Activated CD8-positive, alpha-beta memory T cell treated with anti-CD3 and anti-CD28 coated beads, Interleukin-2, amount 10 ng/mL, durations not matched to agents 7 days and 5 days (primary cell): ENCODE measurements at regions of chr15 and their contacts with region 1.

Region 1: DNA sequence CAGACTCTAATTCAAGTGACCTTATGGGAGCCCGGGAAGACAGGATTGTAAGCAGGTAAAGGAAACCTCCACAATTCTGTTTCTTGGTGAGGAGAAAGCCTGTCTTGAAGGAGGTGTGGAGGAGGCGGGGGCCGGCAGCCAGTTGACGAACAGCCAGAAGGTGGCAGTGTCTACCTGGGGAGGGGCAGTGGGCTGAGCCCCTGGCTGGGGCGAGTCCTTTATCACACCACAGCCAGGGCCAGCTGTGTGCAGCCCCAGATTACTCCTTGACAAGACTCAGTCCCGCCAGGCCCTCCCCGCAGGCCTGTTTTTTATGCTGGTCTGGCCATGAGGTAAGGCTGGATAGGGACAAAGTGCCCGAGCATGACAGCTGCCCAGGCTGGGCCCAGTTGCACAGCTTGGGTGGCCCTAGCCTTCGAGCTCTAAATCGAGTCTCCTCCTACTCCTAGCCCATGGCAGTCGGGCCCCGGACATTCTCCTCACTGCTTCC is 40.9 kb upstream of the IDH2 start:
- DNase-seq: peak; percentile 84
- ATAC-seq: peak; percentile 88
- H3K4me3 Mint-ChIP-seq: no peak overlapping the region
- H3K27ac Mint-ChIP-seq: peak overlapping the region; percentile 80
- H3K4me1 Mint-ChIP-seq: peaks cover 38% of the 10 kb centered on the region
- H3K27me3 Mint-ChIP-seq: no peaks in the 10 kb centered on the region

Region 2: DNA sequence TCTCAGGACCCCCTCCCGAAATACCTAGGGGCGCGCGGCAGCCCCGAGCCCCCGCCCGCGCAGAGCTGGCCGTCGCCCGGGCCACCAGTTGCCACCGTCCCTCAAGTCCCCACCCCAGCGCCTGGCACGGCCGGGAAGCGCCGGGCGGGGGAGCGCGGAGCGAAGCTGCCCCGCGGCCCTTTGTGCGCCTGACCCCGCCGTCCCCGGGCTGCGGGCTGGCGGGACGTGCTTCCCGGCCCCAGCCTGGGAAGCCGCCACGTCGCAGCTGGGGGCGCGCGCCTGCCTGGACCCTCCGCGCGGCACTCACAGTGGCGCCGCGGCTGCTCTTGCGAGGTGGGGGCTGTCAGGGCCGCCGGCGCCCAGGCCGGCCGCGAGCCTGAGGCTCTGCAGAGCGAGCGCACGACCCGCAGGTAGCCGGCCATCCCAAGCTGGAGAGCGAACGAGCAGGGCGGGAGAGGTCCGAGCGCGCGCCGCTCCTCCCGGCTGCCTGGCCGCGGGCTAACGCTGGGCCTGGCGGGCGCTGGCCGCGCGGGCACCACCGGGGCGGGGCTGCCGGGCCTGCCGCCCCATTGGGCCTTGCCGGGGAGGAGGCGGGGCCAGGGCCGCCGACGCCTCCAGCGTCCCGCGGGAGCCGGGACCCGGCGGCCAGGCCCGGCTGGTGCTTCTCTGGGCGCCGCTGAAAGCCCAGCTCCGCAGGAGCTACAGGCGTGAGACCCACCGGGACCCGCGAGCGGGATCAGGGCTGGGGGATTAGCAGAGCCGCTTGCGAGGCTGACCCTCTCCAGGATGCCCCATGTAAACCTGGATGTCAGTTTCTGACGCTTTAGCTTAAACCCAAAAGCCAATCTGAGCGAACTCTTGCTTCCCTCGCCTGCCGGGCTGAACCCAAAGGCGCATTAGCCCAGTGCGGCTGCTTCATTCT is 41.0 kb before region 1 on chr15 and contains the start of gene IDH2:
- CTCF ChIA-PET with region 1: interaction called, 11 read pairs
- DNase-seq: peak; percentile 80
- ATAC-seq: peak; percentile 84
- H3K4me3 Mint-ChIP-seq: peak within 1 kb of the TSS; percentile 79
- H3K27ac Mint-ChIP-seq: peak within 1 kb of the TSS; percentile 96
- H3K4me1 Mint-ChIP-seq: peaks cover 47% of the 10 kb centered on the region
- H3K27me3 Mint-ChIP-seq: peaks cover 4% of the 10 kb centered on the region
- total RNA-seq, gene IDH2: 196 to 293 TPM

Region 3: GRCh38 chr15:90178468-90179435 is 35.5 kb after region 1 on chr15:
- CTCF ChIA-PET with region 1: no interaction called
- DNase-seq: no peak
- ATAC-seq: no peak
- H3K4me3 Mint-ChIP-seq: no peak overlapping the region
- H3K27ac Mint-ChIP-seq: no peak overlapping the region
- H3K4me1 Mint-ChIP-seq: peaks cover 17% of the 10 kb centered on the region
- H3K27me3 Mint-ChIP-seq: peaks cover 10% of the 10 kb centered on the region

Region 4: DNA sequence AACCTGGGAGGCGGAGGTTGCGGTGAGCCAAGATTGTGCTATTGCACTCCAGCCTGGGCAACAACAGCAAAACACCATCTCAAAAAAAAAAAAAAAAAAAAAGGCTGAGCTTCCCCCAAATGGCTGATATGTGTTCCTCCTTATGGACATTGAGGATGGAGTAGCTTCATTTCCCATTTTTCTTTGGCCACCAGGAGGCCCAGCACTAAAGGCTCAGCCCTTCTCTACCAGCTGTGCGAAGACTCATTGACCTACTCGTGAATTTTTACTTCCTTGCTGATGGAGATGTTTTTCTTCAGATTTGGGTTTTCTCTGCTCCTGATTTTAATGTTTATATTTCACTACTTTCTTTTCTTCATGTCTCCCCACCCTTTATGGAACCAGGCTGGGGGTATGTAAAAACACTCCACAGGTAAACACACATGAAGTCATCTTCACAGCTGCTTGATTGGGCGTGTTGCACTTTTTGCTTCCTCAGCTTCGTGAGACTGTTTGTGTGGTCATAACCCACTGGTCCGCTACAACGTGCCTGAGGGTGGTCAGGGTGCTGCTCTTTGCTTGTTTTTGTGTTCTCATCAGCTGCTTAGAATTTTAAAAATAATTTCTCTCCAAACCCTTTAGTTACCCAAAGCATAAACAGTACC is 71.5 kb after region 1 on chr15:
- CTCF ChIA-PET with region 1: interaction called, 11 read pairs
- DNase-seq: no peak
- ATAC-seq: no peak
- H3K4me3 Mint-ChIP-seq: no peak overlapping the region
- H3K27ac Mint-ChIP-seq: no peak overlapping the region
- H3K4me1 Mint-ChIP-seq: peaks cover 40% of the 10 kb centered on the region
- H3K27me3 Mint-ChIP-seq: no peaks in the 10 kb centered on the region

Region 5: GRCh38 chr15:90221246-90221900 is 78.2 kb after region 1 on chr15:
- CTCF ChIA-PET with region 1: interaction called, 27 read pairs
- DNase-seq: no peak
- ATAC-seq: peak; percentile 25
- H3K4me3 Mint-ChIP-seq: no peak overlapping the region
- H3K27ac Mint-ChIP-seq: no peak overlapping the region
- H3K4me1 Mint-ChIP-seq: peaks cover 17% of the 10 kb centered on the region
- H3K27me3 Mint-ChIP-seq: no peaks in the 10 kb centered on the region